Heart left ventricle (tissue), 16 donors: ENCODE measurements at regions of chr14 and their contacts with region 1.

Region 1: GRCh38 chr14:75278422-75279161 is at the start of gene FOS:
- DNase-seq: peak; percentile 94 to 95 (median 94)
- ATAC-seq: peak; percentile 73 to 82 (median 80)
- H3K4me3 ChIP-seq: peak within 1 kb of the TSS; percentile 56 to 98 (median 88)
- H3K27ac ChIP-seq: peak within 1 kb of the TSS; percentile 91 to 100 (median 99)
- H3K4me1 ChIP-seq: peaks cover 6 to 71% (median 32%) of the 10 kb centered on the region in 12 donors
- H3K27me3 ChIP-seq: no peaks in the 10 kb centered on the region
- CTCF ChIP-seq: no peak
- POLR2A ChIP-seq: peak; percentile 85 to 99
- total RNA-seq, gene FOS: 6.5 to 549 (median 28.6) TPM

Region 2: DNA sequence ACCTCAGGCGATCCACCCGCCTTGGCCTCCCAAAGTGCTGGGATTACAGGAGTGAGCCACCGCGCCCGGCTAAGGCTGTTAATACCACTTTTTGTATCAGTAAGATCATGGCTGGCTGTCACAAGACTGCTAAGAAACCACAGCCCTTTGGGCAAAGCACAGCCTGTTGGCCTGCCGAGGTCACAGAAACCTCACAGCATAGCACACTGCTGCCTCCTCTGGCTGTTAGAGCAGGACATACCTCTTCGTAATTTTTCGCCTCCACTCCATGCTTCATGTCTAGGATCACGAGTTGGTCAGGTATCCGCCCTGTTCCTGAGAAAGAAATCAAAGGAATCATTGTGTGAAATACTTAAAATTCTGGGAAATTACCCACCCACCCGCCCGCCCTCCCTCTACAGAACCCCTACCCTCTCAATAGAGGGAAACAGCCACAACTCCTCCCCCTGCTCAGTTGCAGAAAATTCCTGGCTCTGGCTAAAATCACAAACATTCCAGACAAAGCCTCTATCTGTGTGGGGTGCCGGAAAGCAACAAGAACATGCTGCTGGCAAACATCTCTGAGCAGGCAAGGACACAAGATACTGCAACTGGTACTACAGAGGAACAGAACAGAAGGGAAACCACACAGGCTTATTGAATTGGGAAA is 131.0 kb before region 1 on chr14:
- intact Hi-C with region 1: loop called in 1 of 10 experiments (anchors 5 kb)
- DNase-seq: peak in 4 of 5 donors; percentile 64 to 80 (median 70)
- ATAC-seq: peak; percentile 84 to 94 (median 92)
- H3K4me3 ChIP-seq: peak overlapping the region in 4 of 12 donors; percentile 4 to 18 (median 12)
- H3K27ac ChIP-seq: peak overlapping the region; percentile 56 to 93 (median 84)
- H3K4me1 ChIP-seq: peaks cover 3 to 83% (median 45%) of the 10 kb centered on the region in 12 donors
- H3K27me3 ChIP-seq: no peaks in the 10 kb centered on the region
- CTCF ChIP-seq: peak; percentile 15 to 69 (median 50)
- POLR2A ChIP-seq: no peak

Region 3: GRCh38 chr14:75323571-75323970 is 45.0 kb after region 1 on chr14:
- intact Hi-C with region 1: no loop called
- DNase-seq: no peak
- ATAC-seq: no peak
- H3K4me3 ChIP-seq: no peak overlapping the region
- H3K27ac ChIP-seq: no peak overlapping the region
- H3K4me1 ChIP-seq: no peaks in the 10 kb centered on the region
- H3K27me3 ChIP-seq: no peaks in the 10 kb centered on the region
- CTCF ChIP-seq: no peak
- POLR2A ChIP-seq: no peak

Region 4: DNA sequence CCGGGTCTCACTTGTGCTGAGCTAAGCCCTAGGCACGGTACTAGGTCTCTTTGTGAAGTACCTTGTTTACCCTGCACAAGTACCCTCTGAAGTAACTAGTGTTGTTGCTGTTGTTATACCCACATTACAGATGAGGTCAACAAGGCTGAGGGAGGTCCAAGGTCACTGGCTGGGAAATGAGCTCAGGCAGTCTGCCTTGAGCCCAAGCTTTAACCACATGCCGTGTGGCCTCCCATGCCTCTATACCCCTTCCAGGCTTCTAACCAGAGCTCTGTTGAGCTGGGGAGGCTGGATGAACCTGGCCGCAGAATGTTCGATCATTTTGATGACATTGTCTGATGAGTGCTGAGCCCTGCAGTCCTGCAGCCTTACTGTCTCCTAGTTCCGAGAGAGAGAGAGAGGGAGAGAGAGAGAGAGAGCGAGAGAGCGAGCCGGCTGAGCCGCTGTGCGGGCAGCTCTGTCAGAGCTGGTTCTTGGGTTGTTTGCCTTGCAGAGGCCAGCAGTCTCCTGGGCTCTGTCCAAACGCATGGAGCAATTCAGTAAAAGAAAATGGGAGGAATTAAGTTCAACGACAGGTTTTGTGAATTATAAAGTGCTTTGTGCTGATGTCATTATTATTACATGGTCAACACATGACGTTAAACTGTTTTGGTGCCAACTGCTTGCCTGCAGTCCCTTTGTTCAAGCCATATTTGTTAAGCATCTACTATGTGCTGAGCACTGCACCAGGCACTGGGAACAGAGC is 162.3 kb after region 1 on chr14:
- intact Hi-C with region 1: no loop called
- DNase-seq: peak in 3 of 5 donors; percentile 45 to 83 (median 81)
- ATAC-seq: peak; percentile 48 to 82 (median 74)
- H3K4me3 ChIP-seq: no peak overlapping the region
- H3K27ac ChIP-seq: peak overlapping the region in 10 of 12 donors; percentile 28 to 76 (median 60)
- H3K4me1 ChIP-seq: peaks cover 0 to 77% (median 39%) of the 10 kb centered on the region in 12 donors
- H3K27me3 ChIP-seq: no peaks in the 10 kb centered on the region
- CTCF ChIP-seq: no peak
- POLR2A ChIP-seq: no peak